GM12878 (cell line): ENCODE measurements at regions of chr3 and their contacts with region 1.

Region 1: DNA sequence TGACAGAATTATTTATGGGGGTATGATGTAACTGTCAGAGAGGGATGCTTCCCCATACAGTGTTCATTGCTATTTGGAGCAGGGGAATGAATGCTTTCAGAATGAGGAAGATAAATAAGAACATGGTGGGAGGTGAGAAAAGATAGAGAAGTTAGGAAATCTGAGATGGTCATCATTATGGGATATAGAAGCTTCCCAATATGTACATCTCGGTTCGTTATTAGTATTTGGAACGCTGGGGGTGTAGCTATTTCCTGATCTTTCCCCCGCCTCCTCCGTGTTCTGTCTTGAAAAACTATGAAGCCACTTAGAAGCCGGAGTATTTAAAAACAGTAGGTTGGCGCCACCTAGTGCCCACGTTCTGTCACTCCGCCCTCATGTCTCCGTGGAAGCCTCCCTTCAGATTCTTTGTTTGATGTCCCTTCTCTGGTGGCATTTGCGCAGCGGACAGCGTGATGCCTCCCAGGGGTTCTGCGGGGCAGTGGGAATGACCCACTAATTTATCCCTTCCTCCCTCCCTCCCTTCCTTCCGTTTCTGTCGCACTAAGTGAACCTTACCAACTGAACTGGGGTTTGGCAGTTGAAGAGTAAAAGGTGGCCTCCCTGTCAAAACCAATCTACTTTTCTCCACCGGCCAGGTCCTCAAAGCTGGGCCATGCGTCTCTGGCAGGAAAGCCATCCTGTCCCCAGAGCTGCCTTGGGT is 184.5 kb downstream of the FEZF2 start:
- DNase-seq: no peak
- ATAC-seq: peak; percentile 89
- H3K4me3 ChIP-seq: no peak overlapping the region
- H3K27ac ChIP-seq: no peak overlapping the region
- H3K4me1 ChIP-seq: no peaks in the 10 kb centered on the region
- H3K27me3 ChIP-seq: no peaks in the 10 kb centered on the region
- CTCF ChIP-seq: peak; percentile 71 to 82 (median 76)
- EP300 ChIP-seq: no peak
- POLR2A ChIP-seq: no peak
- RAD21 ChIP-seq: peak; percentile 78

Region 2: GRCh38 chr3:61381745-61382392 is 807.0 kb before region 1 on chr3:
- CTCF ChIA-PET with region 1: interaction called, 7 read pairs
- POLR2A ChIA-PET with region 1: no interaction called
- RAD21 ChIA-PET with region 1: interaction called, 8 read pairs
- SMC1A ChIA-PET with region 1: no interaction called
- in situ Hi-C with region 1: no loop called
- intact Hi-C with region 1: loop called (anchors 10 kb)
- DNase-seq: no peak
- ATAC-seq: peak; percentile 99
- H3K4me3 ChIP-seq: no peak overlapping the region
- H3K27ac ChIP-seq: no peak overlapping the region
- H3K4me1 ChIP-seq: no peaks in the 10 kb centered on the region
- H3K27me3 ChIP-seq: no peaks in the 10 kb centered on the region; a peak in 1 of 4 replicates
- CTCF ChIP-seq: peak; percentile 58 to 73 (median 61); a peak in 5 of 6 replicates
- EP300 ChIP-seq: no peak
- POLR2A ChIP-seq: no peak
- RAD21 ChIP-seq: peak; percentile 85

Region 3: DNA sequence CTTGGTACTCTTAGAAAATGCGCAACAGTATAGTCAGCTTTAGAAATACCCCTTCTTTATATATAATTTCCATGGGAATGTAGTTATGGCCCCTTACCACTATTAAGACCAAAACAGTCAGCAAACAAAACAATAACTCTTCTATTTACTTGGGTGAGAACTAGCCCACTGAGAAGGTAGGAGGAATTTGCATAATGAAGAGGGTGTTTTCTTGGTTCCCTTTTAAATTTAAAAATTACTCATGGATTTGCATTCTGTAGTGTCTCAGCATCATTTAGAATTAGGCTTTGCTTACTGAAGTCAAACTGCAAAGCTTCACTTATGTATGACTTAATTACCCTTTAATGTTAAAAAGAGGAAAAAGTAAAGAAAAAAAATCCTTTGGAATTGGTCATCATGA is 276.7 kb before region 1 on chr3:
- CTCF ChIA-PET with region 1: interaction called, 10 read pairs
- POLR2A ChIA-PET with region 1: no interaction called
- RAD21 ChIA-PET with region 1: no interaction called
- SMC1A ChIA-PET with region 1: interaction called, 4 read pairs
- in situ Hi-C with region 1: no loop called
- intact Hi-C with region 1: no loop called
- DNase-seq: no peak
- ATAC-seq: peak; percentile 73
- H3K4me3 ChIP-seq: no peak overlapping the region
- H3K27ac ChIP-seq: no peak overlapping the region
- H3K4me1 ChIP-seq: 0 out of 2 replicates have a peak, but pooled peaks cover 4% of the 10 kb centered on the region
- H3K27me3 ChIP-seq: 0 out of 4 replicates have a peak, but pooled peaks cover 0 to 2% of the 10 kb centered on the region in 2 experiments
- CTCF ChIP-seq: no peak
- EP300 ChIP-seq: peak in 1 of 2 experiments; percentile 72; a peak in 1 of 4 replicates
- POLR2A ChIP-seq: no peak
- RAD21 ChIP-seq: no peak

Region 4: DNA sequence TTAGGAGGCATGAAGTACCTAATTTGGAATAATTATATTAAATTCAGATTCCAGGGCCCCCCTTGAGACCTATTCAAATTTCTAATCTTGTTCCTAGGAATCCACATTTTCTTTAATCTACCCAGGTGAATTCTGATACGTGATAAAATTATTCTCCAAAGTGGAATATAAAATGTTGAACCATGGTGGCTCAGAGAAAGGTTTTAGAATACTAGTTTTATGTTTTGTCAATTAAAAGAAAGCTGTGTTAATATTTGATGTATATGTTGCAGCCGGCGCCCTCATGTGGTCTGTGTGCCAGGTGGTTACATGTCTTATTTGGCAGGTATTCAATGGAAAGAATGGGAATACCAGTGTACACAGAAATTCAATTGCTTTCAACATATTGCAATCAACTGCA is 137.3 kb before region 1 on chr3:
- CTCF ChIA-PET with region 1: interaction called, 24 read pairs
- POLR2A ChIA-PET with region 1: no interaction called
- RAD21 ChIA-PET with region 1: no interaction called
- SMC1A ChIA-PET with region 1: interaction called, 4 read pairs
- in situ Hi-C with region 1: no loop called
- intact Hi-C with region 1: no loop called
- DNase-seq: no peak
- ATAC-seq: peak; percentile 26; the same call in 1 of the 3 replicates
- H3K4me3 ChIP-seq: no peak overlapping the region
- H3K27ac ChIP-seq: no peak overlapping the region
- H3K4me1 ChIP-seq: no peaks in the 10 kb centered on the region
- H3K27me3 ChIP-seq: no peaks in the 10 kb centered on the region; a peak in 1 of 4 replicates
- CTCF ChIP-seq: peak in 2 of 3 experiments; percentile 6 to 22; a peak in 2 of 6 replicates
- EP300 ChIP-seq: no peak
- POLR2A ChIP-seq: no peak
- RAD21 ChIP-seq: no peak

Region 5: GRCh38 chr3:62131592-62131991 is 57.2 kb before region 1 on chr3:
- CTCF ChIA-PET with region 1: interaction called, 15 read pairs
- POLR2A ChIA-PET with region 1: no interaction called
- RAD21 ChIA-PET with region 1: interaction called, 3 read pairs
- SMC1A ChIA-PET with region 1: interaction called, 16 read pairs
- in situ Hi-C with region 1: no loop called
- intact Hi-C with region 1: no loop called
- DNase-seq: no peak
- ATAC-seq: peak; percentile 61
- H3K4me3 ChIP-seq: no peak overlapping the region
- H3K27ac ChIP-seq: no peak overlapping the region
- H3K4me1 ChIP-seq: no peaks in the 10 kb centered on the region
- H3K27me3 ChIP-seq: no peaks in the 10 kb centered on the region
- CTCF ChIP-seq: peak in 2 of 3 experiments; percentile 26 to 34; a peak in 2 of 6 replicates
- EP300 ChIP-seq: no peak
- POLR2A ChIP-seq: no peak
- RAD21 ChIP-seq: 0 out of 2 replicates have a peak, but pooled peaks have one; percentile 19

Region 6: DNA sequence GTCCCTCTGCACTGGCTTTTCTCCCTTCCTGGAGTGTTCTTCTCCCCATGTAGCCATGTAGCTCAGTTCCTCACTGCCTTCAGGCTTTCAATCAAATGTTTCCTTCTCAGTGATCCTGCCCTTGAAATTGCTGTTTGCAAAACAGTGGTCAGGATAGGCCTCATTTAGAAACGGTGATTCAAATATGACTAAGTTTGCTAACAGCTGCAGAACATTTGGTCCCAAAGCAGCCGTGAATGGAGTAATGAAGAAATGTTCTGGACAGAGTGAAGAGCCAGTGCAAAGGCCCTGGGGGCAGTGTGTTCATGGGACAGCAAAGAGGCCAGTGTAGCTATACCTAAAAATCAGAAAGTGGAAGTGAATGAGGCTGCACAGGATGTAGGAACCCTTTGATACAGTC is 38.9 kb before region 1 on chr3:
- CTCF ChIA-PET with region 1: interaction called, 9 read pairs
- POLR2A ChIA-PET with region 1: no interaction called
- RAD21 ChIA-PET with region 1: interaction called, 10 read pairs
- SMC1A ChIA-PET with region 1: interaction called, 15 read pairs
- in situ Hi-C with region 1: no loop called
- intact Hi-C with region 1: no loop called
- DNase-seq: no peak
- ATAC-seq: peak; percentile 80
- H3K4me3 ChIP-seq: no peak overlapping the region
- H3K27ac ChIP-seq: no peak overlapping the region
- H3K4me1 ChIP-seq: no peaks in the 10 kb centered on the region
- H3K27me3 ChIP-seq: no peaks in the 10 kb centered on the region
- CTCF ChIP-seq: no peak
- EP300 ChIP-seq: no peak
- POLR2A ChIP-seq: no peak
- RAD21 ChIP-seq: no peak

Region 7: GRCh38 chr3:62214850-62215249 is 26.0 kb after region 1 on chr3:
- CTCF ChIA-PET with region 1: no interaction called
- POLR2A ChIA-PET with region 1: no interaction called
- RAD21 ChIA-PET with region 1: no interaction called
- SMC1A ChIA-PET with region 1: no interaction called
- in situ Hi-C with region 1: no loop called
- intact Hi-C with region 1: no loop called
- DNase-seq: no peak
- ATAC-seq: no peak
- H3K4me3 ChIP-seq: no peak overlapping the region
- H3K27ac ChIP-seq: no peak overlapping the region
- H3K4me1 ChIP-seq: no peaks in the 10 kb centered on the region
- H3K27me3 ChIP-seq: no peaks in the 10 kb centered on the region; a peak in 2 of 4 replicates
- CTCF ChIP-seq: no peak
- EP300 ChIP-seq: no peak
- POLR2A ChIP-seq: no peak
- RAD21 ChIP-seq: no peak